ENCODE measurements at regions of chr4 and their contacts with region 1.

Region 1: DNA sequence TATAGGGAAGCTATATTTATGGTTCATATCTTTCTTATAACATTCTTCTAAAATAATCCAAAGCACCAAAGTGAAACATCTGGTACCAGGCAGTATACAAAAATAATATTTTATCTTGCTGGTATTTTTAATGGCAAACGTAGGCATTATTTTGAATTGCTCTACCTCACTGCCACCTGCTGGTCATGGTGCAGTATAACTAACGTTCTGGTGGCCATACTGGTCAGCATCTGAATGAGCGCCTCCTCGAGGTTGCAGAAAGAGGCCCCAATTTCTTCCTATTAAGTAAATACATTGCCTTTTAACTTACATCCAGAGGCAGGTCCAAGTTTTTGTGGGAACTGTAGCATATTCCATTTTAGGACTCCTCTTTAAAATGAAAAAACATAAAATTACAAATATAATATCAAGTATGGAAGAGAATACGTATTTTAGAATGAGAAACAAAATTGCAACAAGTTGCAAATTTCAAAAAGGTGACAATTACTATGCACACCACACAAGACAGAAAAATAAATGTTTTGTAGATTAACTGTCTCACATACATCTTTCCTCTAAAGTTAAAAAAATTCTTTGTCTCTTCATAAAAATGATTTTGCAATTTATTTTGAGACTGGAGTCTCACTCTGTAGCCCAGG is 22.9 kb upstream of the CWH43 start:
- DNase-seq: peak in 4 of 6 donors; percentile 58 to 78 (median 63)
- ATAC-seq: peak; percentile 89 to 100 (median 98)
- H3K4me3 ChIP-seq: no peak overlapping the region
- H3K27ac ChIP-seq: no peak overlapping the region
- H3K4me1 ChIP-seq: no peaks in the 10 kb centered on the region
- H3K27me3 ChIP-seq: no peaks in the 10 kb centered on the region
- CTCF ChIP-seq: peak; percentile 78 to 91 (median 82)

Region 2: DNA sequence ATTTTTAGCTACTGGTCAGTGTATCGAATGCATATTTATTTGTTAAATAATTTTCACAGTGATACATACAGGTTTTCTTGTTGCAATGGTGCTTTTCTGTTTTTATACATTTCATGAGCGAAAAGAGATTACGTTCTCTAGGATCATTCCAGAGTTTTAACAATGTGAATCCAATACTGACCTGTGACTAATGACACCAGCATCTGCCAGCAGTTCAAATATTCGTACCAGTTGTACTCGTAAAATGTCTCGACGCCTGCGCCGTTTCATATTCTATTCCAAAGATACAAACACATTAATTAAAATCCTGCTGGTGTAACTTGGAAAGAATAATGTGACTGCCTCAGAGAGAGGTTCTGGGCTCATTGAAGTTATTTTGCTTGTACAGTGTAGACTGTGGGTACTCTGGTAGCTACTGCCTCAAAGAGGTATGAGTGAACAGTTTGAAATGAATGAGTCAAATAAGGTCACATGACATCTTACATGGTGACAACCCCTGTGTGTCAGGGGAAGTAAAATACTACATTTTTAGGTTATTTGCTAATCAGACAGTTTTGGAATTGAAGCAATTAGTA is 392.4 kb before region 1 on chr4:
- intact Hi-C with region 1: loop called in 1 of 3 experiments (anchors 5 kb)
- DNase-seq: no peak
- ATAC-seq: no peak
- H3K4me3 ChIP-seq: no peak overlapping the region
- H3K27ac ChIP-seq: no peak overlapping the region
- H3K4me1 ChIP-seq: no peaks in the 10 kb centered on the region
- H3K27me3 ChIP-seq: no peaks in the 10 kb centered on the region
- CTCF ChIP-seq: no peak

Region 3: DNA sequence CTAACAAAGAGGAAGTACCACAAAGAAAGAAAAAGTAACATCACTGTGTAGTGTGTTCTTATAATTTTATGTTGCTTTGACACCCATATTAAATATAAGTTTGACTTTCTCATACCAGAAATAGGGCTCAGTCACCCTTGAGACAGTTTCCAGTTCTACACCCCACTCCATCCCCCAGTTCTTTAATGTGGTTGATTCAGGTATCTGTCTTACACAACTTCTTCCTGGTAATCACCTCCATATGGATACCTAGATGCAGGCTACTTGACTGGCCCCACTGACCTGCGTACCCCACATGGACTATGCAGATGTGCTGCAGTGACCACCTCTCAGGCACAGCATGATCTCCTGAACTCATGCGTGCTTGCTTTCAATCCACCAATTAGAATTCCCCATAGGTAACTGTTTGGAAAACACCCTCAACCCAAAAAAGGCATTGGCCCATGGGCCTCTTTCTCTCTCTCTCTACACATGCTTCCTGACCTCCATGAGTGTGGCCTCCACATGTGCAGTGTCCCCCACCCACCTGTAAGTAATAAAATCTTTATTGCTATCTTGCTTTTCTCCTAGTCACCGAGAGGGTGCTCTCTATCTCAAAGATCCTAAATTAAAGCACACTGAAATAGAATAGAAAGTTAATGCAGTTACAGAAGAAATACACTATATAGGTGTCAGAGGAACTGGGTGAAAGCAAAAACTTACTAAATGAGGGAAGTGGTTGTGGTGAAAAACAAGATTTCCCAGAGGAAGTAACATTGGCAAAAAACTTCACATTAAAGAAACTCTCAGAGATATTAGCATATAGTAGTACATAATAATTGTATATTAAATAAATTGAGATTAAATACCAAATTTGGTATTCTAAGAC is 374.7 kb before region 1 on chr4:
- intact Hi-C with region 1: loop called in 1 of 3 experiments (anchors 10 kb)
- DNase-seq: no peak
- ATAC-seq: no peak
- H3K4me3 ChIP-seq: no peak overlapping the region
- H3K27ac ChIP-seq: no peak overlapping the region
- H3K4me1 ChIP-seq: no peaks in the 10 kb centered on the region
- H3K27me3 ChIP-seq: no peaks in the 10 kb centered on the region
- CTCF ChIP-seq: no peak